Activated CD8-positive, alpha-beta T cell treated with anti-CD3 and anti-CD28 coated beads for 36 hours (primary cell): ENCODE measurements at regions of chr6 and their contacts with region 1.

Region 1: GRCh38 chr6:10954590-10955010 is 67.7 kb downstream of the SYCP2L start:
- DNase-seq: peak; percentile 83
- ATAC-seq: peak; percentile 89
- H3K4me3 Mint-ChIP-seq: no peak overlapping the region
- H3K27ac Mint-ChIP-seq: no peak overlapping the region
- H3K4me1 Mint-ChIP-seq: no peaks in the 10 kb centered on the region
- H3K27me3 Mint-ChIP-seq: peaks cover 6% of the 10 kb centered on the region
- CTCF ChIP-seq: peak; percentile 81

Region 2: DNA sequence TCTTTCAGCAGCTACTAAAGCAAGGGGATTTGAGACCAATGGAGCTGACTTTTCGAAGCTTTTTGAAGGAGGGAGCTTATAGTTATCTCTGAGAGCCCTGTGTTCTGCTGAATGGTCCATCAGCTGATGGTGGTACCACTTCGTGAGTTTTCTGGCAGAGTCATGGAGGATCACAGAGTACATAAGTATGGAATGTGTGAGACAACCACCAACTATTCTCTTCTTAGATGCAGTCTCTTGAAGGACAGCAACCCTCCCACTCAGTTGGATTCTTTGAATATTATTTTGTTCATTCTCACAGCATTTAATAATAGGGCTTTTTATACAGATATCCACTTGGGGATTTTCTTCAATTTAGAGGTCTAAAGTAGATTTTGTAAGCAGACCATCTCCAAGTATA is 14.2 kb after region 1 on chr6:
- CTCF ChIA-PET with region 1: interaction called, 10 read pairs
- POLR2A ChIA-PET with region 1: no interaction called
- intact Hi-C with region 1: no loop called
- DNase-seq: no peak
- ATAC-seq: no peak
- H3K4me3 Mint-ChIP-seq: no peak overlapping the region
- H3K27ac Mint-ChIP-seq: no peak overlapping the region
- H3K4me1 Mint-ChIP-seq: peaks cover 3% of the 10 kb centered on the region
- H3K27me3 Mint-ChIP-seq: peaks cover 5% of the 10 kb centered on the region
- CTCF ChIP-seq: no peak

Region 3: GRCh38 chr6:11064836-11065235 is 110.2 kb after region 1 on chr6:
- CTCF ChIA-PET with region 1: interaction called, 32 read pairs
- POLR2A ChIA-PET with region 1: no interaction called
- intact Hi-C with region 1: loop called (anchors 5 kb)
- DNase-seq: no peak
- ATAC-seq: no peak
- H3K4me3 Mint-ChIP-seq: no peak overlapping the region
- H3K27ac Mint-ChIP-seq: no peak overlapping the region
- H3K4me1 Mint-ChIP-seq: no peaks in the 10 kb centered on the region
- H3K27me3 Mint-ChIP-seq: peaks cover 8% of the 10 kb centered on the region
- CTCF ChIP-seq: no peak